Lower leg skin (tissue), 4 donors: ENCODE measurements at regions of chr3 and their contacts with region 1.

Region 1: DNA sequence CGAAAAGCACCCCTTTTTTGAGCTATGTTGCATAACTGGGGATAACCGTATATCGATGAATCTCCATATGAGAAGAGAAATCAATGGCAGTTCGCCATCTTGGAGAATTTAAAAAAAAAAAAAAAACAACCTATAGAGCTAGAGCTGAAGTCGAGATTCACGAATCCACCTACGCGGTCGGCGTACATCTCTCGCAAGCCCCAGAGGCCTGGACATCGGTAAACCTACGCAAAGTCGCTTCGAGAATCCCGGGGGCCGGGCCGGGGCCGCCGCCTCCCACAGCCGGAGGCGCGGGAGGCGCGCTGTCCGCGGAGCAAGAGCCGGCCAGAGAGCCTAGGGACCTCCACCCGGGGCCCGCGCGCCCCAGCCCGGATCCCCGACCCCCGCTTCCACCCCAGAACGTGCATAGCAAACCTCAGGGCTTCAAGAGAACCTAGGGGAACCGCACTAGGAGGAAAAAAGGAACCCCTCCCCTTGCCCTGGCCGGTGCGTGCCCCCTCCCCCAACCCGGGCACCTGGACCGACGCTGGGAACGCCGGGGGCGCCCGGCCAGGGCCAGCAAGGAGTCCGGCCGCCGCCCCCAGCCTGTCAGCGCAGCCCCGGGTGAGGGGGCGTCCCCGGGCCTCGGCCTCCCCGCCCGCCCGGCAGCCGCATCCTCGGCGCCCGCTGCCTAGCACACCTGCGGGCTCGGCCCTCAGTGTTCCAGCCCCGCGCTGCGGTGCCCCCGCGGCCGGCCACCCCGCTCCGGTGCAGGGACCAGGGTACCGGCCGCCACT is 567 bp downstream of the PFN2 start:
- DNase-seq: peak; percentile 49 to 93
- H3K4me3 ChIP-seq: peak overlapping the region; percentile 56
- CTCF ChIP-seq: no peak
- POLR2A ChIP-seq: no peak

Region 2: GRCh38 chr3:150216041-150216811 is 246.1 kb after region 1 on chr3:
- intact Hi-C with region 1: loop called (anchors 10 kb)
- DNase-seq: peak in 1 of 2 donors; percentile 79
- H3K4me3 ChIP-seq: no peak overlapping the region
- CTCF ChIP-seq: no peak
- POLR2A ChIP-seq: no peak